Mammary epithelial cell (primary cell): ENCODE measurements at regions of chr12 and their contacts with region 1.

Region 1: DNA sequence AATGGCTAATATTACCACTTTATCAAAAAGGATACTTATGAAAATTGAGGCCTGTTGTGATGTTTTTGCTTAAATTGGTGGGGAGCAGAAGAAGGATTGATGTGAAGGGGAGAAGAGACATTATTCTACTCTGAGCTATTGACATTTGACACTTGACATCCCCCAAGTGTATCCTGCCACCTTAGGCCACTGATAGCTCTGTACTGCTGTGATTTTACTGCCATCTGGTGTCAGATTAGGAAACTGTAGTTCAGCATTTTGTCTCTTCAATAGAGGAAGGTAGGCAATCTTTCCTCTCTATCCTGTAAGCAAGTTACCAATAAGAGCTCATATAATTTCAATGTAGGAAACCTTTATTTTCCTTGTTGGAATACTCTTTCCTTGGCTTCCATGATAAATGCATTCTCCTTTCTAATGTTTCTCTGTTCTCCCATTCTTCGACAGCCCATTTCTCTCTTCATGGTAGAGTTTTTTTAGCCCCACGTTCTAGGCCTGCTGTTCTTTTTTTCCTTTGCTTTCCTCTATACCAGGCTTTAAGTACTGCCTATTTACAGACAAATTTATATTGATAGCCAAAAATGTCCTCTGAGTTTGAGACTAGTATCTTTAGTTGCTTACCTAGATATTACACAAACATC is 46.3 kb downstream of the PPHLN1 start:
- DNase-seq: peak; percentile 38
- H3K4me3 ChIP-seq: no peak overlapping the region
- H3K27ac ChIP-seq: no peak overlapping the region
- H3K4me1 ChIP-seq: no peaks in the 10 kb centered on the region
- H3K27me3 ChIP-seq: no peaks in the 10 kb centered on the region
- CTCF ChIP-seq: peak; percentile 76 to 79

Region 2: DNA sequence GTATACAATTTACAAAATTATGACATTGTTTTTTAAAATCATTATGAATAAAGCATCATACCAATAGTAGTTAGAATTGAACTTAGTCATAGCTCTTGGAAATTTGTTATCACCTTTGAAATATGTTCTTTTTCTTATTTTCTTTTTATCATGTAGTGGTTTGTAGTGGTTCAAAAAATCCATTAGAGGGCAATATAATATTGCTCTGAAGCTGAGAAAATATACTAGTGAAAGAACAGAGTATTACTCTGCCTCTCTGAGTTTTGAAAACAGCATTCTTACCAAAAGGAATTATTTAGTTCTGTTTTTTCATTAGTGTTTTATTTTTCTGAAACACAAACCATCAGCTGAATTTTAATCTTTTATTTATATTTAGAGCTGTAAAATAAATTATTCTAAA is 1108.0 kb before region 1 on chr12:
- CTCF ChIA-PET with region 1: no interaction called
- dilution Hi-C with region 1: no loop called
- in situ Hi-C with region 1: no loop called
- intact Hi-C with region 1: loop called (anchors 10 kb)
- DNase-seq: no peak
- H3K4me3 ChIP-seq: no peak overlapping the region
- H3K27ac ChIP-seq: no peak overlapping the region
- H3K4me1 ChIP-seq: no peaks in the 10 kb centered on the region
- H3K27me3 ChIP-seq: peaks cover 2% of the 10 kb centered on the region
- CTCF ChIP-seq: peak; percentile 44 to 48

Region 3: GRCh38 chr12:42023733-42024494 is 348.4 kb before region 1 on chr12:
- CTCF ChIA-PET with region 1: no interaction called
- dilution Hi-C with region 1: no loop called
- in situ Hi-C with region 1: no loop called
- intact Hi-C with region 1: loop called (anchors 1 kb)
- DNase-seq: peak; percentile 50
- H3K4me3 ChIP-seq: peak overlapping the region; percentile 32 to 41 (median 35)
- H3K27ac ChIP-seq: no peak overlapping the region
- H3K4me1 ChIP-seq: no peaks in the 10 kb centered on the region
- H3K27me3 ChIP-seq: no peaks in the 10 kb centered on the region
- CTCF ChIP-seq: peak; percentile 93 to 96

Region 4: GRCh38 chr12:42129595-42130204 is 242.6 kb before region 1 on chr12:
- CTCF ChIA-PET with region 1: interaction called, 7 read pairs
- dilution Hi-C with region 1: loop called (anchors 10 kb)
- in situ Hi-C with region 1: no loop called
- intact Hi-C with region 1: loop called (anchors 1 kb)
- DNase-seq: peak; percentile 61
- H3K4me3 ChIP-seq: no peak overlapping the region
- H3K27ac ChIP-seq: peak overlapping the region; percentile 75
- H3K4me1 ChIP-seq: peaks cover 25% of the 10 kb centered on the region
- H3K27me3 ChIP-seq: no peaks in the 10 kb centered on the region
- CTCF ChIP-seq: peak; percentile 80 to 88

Region 5: DNA sequence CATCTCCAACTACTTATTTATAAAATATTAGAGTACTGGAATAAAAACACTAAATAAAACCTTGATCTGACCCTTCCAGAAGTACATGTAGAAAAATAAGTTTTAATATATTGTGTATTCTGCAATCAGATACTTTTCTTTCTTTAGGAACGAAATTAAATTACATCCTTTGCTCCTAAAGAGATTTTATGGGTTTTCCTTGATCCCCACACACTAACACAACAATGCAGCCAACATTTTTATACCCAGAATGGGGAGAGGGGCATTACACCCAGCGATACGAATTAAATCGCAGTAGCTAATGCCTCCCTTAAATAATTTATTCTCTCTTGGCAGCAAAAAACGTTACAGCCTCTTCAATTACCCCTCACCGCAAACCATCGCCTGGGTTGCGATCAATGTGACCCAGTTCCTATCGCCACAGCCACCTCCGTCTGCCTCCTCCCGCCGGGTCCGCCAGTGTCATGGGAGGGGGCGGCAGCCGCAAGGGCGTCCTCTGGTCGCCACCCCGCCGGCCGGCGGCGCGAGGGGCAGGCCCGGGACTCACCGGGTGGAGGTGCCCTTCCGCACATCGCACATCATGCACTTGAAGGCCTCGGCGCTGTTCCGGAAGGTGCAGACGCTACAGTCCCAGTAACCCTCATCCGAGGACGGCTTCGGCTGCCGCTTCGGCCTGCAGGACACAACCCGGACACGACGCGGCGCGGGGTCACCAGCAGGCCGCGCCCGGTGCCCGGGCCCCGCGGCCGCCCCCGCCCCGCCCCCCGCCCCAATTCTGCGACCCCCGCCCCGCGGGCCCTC is 135.0 kb before region 1 on chr12:
- CTCF ChIA-PET with region 1: no interaction called
- dilution Hi-C with region 1: no loop called
- in situ Hi-C with region 1: no loop called
- intact Hi-C with region 1: loop called (anchors 2 kb)
- DNase-seq: peak; percentile 73
- H3K4me3 ChIP-seq: peak overlapping the region; percentile 67 to 82 (median 77)
- H3K27ac ChIP-seq: peak overlapping the region; percentile 56
- H3K4me1 ChIP-seq: peaks cover 8% of the 10 kb centered on the region
- H3K27me3 ChIP-seq: no peaks in the 10 kb centered on the region
- CTCF ChIP-seq: peak; percentile 34 to 65

Region 6: GRCh38 chr12:43282106-43282505 is 909.8 kb after region 1 on chr12:
- CTCF ChIA-PET with region 1: no interaction called
- dilution Hi-C with region 1: no loop called
- in situ Hi-C with region 1: no loop called
- intact Hi-C with region 1: loop called (anchors 1 kb)
- DNase-seq: no peak
- H3K4me3 ChIP-seq: no peak overlapping the region
- H3K27ac ChIP-seq: no peak overlapping the region
- H3K4me1 ChIP-seq: peaks cover 35% of the 10 kb centered on the region
- H3K27me3 ChIP-seq: no peaks in the 10 kb centered on the region
- CTCF ChIP-seq: peak; percentile 36 to 48

Region 7: GRCh38 chr12:43338848-43339526 is 966.7 kb after region 1 on chr12:
- CTCF ChIA-PET with region 1: no interaction called
- dilution Hi-C with region 1: no loop called
- in situ Hi-C with region 1: no loop called
- intact Hi-C with region 1: loop called (anchors 2 kb)
- DNase-seq: peak; percentile 48
- H3K4me3 ChIP-seq: no peak overlapping the region
- H3K27ac ChIP-seq: peak overlapping the region; percentile 23
- H3K4me1 ChIP-seq: peaks cover 30% of the 10 kb centered on the region
- H3K27me3 ChIP-seq: no peaks in the 10 kb centered on the region
- CTCF ChIP-seq: peak; percentile 63 to 88